Heart left ventricle (tissue), 16 donors: ENCODE measurements at regions of chr1 and their contacts with region 1.

Region 1: GRCh38 chr1:23194119-23194984 is 22.9 kb downstream of the HTR1D start:
- DNase-seq: no peak
- ATAC-seq: no peak
- H3K4me3 ChIP-seq: no peak overlapping the region
- H3K27ac ChIP-seq: no peak overlapping the region
- H3K4me1 ChIP-seq: no peaks in the 10 kb centered on the region
- H3K27me3 ChIP-seq: no peaks in the 10 kb centered on the region
- CTCF ChIP-seq: no peak
- POLR2A ChIP-seq: no peak

Region 2: DNA sequence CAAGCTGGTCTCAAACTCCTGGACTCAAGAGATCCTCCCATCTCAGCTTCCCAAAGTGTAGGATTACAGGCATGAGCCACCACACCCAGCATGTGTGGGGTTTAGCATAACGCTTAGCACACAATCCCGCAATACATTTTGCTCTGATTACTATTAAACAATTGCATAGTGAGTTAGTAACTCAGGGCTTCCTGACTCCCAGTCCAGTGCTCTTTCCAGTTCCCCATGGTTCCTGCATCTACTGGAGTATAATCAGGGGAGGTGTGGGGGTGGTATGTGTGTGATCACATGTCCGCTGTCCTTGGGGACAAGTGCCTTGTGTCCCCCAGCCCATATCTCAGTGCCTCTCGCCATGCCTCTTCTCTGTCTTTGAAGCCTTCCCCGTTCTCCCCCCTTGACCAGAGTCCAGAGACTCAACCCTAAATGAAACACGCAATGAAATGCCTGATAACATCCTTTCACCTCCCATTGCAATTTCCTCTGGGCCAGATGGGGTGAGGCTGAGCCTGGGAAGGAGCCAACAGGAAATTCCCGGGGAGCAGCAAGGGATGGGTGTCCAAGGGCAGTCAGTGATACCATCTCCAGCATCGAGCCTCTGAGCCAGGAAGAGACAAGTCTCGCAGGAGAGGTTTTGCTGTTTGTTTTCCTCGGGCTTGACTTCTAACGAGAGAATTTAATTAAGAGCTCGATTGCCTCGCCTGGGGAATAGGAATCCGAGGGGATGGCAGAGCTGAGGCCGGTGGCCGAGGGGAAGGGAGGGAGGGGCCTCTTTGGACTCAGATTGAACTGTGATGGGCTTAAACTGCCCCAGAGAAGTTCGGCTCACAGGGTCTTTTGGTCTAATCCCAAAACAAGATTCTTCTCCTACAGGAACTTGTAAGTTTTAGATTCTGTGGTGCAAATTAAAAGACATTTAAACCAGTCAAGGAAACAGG is 30.6 kb after region 1 on chr1:
- intact Hi-C with region 1: loop called in 1 of 10 experiments (anchors 2 kb)
- DNase-seq: peak in 4 of 5 donors; percentile 33 to 58 (median 55)
- ATAC-seq: peak; percentile 51 to 88 (median 80)
- H3K4me3 ChIP-seq: peak overlapping the region in 1 of 12 donors; percentile 18
- H3K27ac ChIP-seq: peak overlapping the region in 8 of 12 donors; percentile 24 to 65 (median 40)
- H3K4me1 ChIP-seq: peaks cover 0 to 15% (median 7%) of the 10 kb centered on the region in 12 donors
- H3K27me3 ChIP-seq: peaks cover 0 to 9% (median 0%) of the 10 kb centered on the region in 9 donors
- CTCF ChIP-seq: no peak
- POLR2A ChIP-seq: no peak

Region 3: GRCh38 chr1:23376890-23377811 is 182.8 kb after region 1 on chr1:
- intact Hi-C with region 1: no loop called
- DNase-seq: peak in 4 of 5 donors; percentile 36 to 71 (median 60)
- ATAC-seq: peak; percentile 39 to 85 (median 80)
- H3K4me3 ChIP-seq: no peak overlapping the region
- H3K27ac ChIP-seq: peak overlapping the region in 11 of 12 donors; percentile 3 to 81 (median 58)
- H3K4me1 ChIP-seq: peaks cover 0 to 36% (median 14%) of the 10 kb centered on the region in 12 donors
- H3K27me3 ChIP-seq: no peaks in the 10 kb centered on the region
- CTCF ChIP-seq: no peak
- POLR2A ChIP-seq: no peak